HAP-1 (cell line): ENCODE measurements at regions of chr15 and their contacts with region 1.

Region 1: GRCh38 chr15:74460871-74461846 is at the start of gene UBL7:
- DNase-seq: peak; percentile 100
- H3K4me3 ChIP-seq: peak within 1 kb of the TSS; percentile 54
- H3K4me1 ChIP-seq: peaks cover 17% of the 10 kb centered on the region
- H3K27me3 ChIP-seq: no peaks in the 10 kb centered on the region

Region 2: GRCh38 chr15:74531144-74531811 is 70.1 kb after region 1 on chr15:
- in situ Hi-C with region 1: loop called (anchors 10 kb)
- DNase-seq: peak; percentile 87 to 100
- H3K4me3 ChIP-seq: no peak overlapping the region
- H3K4me1 ChIP-seq: peaks cover 30% of the 10 kb centered on the region
- H3K27me3 ChIP-seq: no peaks in the 10 kb centered on the region